Activated CD8-positive, alpha-beta T cell treated with anti-CD3 and anti-CD28 coated beads for 36 hours (primary cell): ENCODE measurements at regions of chr14 and their contacts with region 1.

Region 1: DNA sequence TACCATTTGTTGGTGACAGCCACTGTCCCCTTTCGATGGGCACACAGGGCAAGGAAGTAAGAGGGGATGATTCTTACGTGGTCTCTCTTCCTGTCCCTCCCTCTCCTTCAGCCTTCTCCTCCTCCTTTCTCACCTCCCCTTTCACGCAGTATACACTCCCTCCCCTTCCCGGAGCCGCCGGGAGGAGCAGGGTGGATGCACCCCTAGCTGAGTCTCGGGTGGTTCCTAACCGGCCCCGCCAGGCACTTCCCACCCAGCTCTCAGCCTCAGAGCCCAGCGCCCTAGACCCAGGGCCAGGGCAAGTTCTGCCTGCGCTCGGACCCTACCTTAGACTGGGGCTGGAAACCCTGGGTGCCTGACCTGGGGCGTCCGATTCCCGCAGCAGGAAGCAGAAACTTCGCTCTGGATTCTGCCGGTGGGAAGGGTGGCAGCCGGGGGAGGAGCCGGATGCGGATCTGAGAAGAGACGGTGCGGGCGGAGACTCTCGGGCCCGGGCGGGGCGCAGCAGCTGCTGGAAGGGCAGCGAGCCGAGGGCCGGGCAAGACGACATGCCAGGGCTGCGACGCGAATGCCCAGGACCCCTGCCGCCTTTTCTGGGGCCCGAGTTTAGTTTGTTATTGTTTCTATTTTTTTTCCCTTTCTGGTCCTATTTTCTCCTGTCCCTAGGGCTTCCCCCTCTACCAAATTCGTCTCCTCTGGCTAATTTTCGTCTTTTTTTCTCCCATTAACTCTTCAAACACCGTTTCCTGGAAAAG is at the start of gene TEP1:
- DNase-seq: peak; percentile 85
- ATAC-seq: peak; percentile 82
- H3K4me3 Mint-ChIP-seq: peak within 1 kb of the TSS; percentile 92
- H3K27ac Mint-ChIP-seq: peak within 1 kb of the TSS; percentile 97
- H3K4me1 Mint-ChIP-seq: peaks cover 45% of the 10 kb centered on the region
- H3K27me3 Mint-ChIP-seq: no peaks in the 10 kb centered on the region
- CTCF ChIP-seq: no peak
- total RNA-seq, gene TEP1: 22.8 to 25.3 TPM

Region 2: DNA sequence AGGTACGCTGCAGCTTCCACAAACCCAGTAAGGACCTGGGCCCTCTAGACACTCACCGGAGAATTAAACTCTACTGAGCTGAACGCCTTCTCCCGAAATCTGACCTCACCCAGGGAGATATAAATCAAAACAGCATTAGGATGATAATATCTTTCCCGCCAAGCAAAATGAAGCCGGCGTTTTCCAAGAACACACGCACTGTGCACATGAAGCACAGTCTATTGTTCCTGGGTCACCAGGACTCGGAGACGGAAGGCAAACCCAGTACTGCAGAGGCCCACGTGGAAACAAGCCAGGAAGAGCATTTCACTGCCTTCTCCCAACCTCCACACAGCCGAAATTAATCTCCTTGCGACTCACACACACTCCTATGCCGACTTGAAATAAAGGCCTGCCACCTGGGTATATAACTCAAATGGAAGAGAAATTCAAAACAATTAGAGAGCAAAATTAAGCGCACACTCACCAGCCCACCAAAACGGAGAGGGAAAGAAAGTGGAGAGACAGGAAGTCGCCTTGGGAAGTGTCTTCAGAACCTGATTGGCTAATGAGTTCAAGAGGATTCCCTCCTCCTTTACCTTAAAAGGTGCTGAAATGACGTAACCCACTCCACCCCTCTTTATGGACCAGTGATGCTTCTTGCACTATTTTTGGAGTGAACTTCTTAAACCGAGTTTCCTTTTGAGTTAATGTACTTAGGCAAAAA is 80.3 kb before region 1 on chr14 and contains the start of gene CCNB1IP1:
- CTCF ChIA-PET with region 1: interaction called, 15 read pairs
- POLR2A ChIA-PET with region 1: no interaction called
- intact Hi-C with region 1: loop called (anchors 5 kb)
- DNase-seq: peak; percentile 67
- ATAC-seq: peak; percentile 99
- H3K4me3 Mint-ChIP-seq: peak within 1 kb of the TSS; percentile 97
- H3K27ac Mint-ChIP-seq: peak within 1 kb of the TSS; percentile 93
- H3K4me1 Mint-ChIP-seq: peaks cover 34% of the 10 kb centered on the region
- H3K27me3 Mint-ChIP-seq: peaks cover 2% of the 10 kb centered on the region
- CTCF ChIP-seq: no peak
- total RNA-seq, gene CCNB1IP1: 79.0 to 82.7 TPM

Region 3: DNA sequence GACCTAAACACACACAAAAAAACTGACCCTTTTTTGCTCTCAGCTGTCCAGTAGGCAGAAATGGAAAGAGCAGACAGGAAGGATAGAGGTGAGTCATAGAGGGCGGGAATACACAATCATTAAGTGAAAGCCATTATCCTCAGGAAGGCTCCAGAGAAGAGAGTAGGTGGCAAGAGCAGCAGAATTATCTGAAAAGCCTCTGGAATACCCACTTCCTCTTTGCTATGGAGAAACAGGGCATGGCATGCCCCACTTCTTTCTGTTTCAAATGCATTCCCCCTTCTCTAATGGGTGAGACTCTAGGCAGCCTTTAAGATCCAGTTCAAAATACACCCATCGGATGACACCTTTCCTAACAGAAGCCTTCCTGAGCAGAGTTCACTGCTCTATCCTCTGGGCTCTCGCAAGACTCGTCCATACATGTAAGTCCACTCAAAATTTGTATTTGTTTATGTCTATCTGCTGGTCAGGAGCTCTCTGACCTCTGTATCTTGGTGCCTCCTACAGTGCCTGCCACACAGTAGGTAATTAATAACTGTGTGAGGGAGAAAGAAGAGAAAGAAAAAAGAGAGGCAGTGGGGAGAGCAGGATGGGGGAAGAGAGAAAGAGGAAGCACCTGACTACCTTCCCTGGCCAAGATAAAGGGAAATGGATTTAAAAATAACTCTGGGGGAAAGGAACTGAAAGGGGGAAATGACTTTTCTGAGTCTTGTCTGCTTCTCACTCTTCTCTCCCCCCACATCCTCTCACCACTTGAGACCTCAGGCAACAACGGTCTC is 14.2 kb after region 1 on chr14:
- CTCF ChIA-PET with region 1: interaction called, 42 read pairs
- POLR2A ChIA-PET with region 1: interaction called, 23 read pairs
- intact Hi-C with region 1: no loop called
- DNase-seq: peak; percentile 26
- ATAC-seq: peak; percentile 72
- H3K4me3 Mint-ChIP-seq: peak overlapping the region; percentile 63
- H3K27ac Mint-ChIP-seq: peak overlapping the region; percentile 91
- H3K4me1 Mint-ChIP-seq: peaks cover 42% of the 10 kb centered on the region
- H3K27me3 Mint-ChIP-seq: no peaks in the 10 kb centered on the region
- CTCF ChIP-seq: no peak

Region 4: DNA sequence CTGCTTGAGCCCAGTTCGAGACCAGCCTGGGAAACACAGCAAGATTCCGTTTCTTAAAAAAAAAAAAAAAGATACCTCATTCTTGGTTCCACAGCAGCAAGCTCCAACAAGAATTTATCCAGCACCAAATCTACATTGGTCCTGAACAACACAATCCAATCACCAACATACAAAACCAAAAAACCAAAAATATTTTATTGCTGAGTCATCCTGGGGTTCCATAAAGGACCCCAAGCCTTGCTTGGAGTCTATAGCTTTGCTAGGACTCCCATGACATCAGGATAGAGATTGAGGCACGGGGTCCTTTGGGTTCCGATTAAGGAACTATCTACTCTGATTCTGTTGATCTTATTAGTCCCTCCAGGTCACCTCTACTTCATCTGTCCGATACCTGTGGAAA is 33.7 kb after region 1 on chr14:
- CTCF ChIA-PET with region 1: interaction called, 72 read pairs
- POLR2A ChIA-PET with region 1: interaction called, 14 read pairs
- intact Hi-C with region 1: no loop called
- DNase-seq: no peak
- ATAC-seq: no peak
- H3K4me3 Mint-ChIP-seq: no peak overlapping the region
- H3K27ac Mint-ChIP-seq: peak overlapping the region; percentile 43
- H3K4me1 Mint-ChIP-seq: peaks cover 7% of the 10 kb centered on the region
- H3K27me3 Mint-ChIP-seq: no peaks in the 10 kb centered on the region
- CTCF ChIP-seq: no peak

Region 5: DNA sequence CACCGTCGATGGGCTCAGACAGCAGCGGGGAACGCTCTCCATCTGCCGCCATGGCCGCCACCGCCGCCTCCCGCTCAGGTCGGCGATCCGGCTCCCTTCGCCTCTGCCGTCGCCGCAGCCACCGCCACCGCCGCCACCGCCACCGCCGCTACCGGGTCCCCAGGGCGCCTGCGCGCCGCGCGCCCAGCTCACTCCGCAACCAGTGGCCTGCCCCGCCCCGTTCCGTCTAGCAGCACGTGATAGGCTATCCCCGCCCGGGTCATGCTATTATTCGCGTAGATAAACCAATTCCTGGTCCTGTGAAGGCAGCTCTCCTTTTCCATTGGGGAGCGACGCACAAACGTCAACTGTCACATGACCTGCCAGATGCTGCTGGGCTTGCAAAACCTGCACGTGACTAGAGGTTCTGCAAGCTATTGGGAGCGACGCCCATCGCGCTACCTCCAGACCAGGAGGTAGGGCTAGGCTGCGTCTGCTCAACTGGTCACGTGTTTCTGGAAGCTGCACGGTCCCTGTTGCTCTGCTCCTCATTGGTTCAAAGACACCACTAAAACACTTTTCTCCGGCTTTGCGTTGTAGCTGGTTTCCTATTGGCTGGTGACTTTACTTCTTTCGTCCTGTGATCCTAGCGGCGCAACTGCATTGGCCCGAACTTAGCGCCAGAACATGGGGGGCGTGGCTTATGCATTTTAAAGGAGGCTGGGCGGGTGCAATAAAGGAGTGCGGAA is 48.2 kb after region 1 on chr14 and contains the start of gene PIP4P1:
- CTCF ChIA-PET with region 1: interaction called, 72 read pairs
- POLR2A ChIA-PET with region 1: interaction called, 43 read pairs
- intact Hi-C with region 1: no loop called
- DNase-seq: peak; percentile 99
- ATAC-seq: peak; percentile 95
- H3K4me3 Mint-ChIP-seq: peak within 1 kb of the TSS; percentile 90
- H3K27ac Mint-ChIP-seq: peak within 1 kb of the TSS; percentile 98
- H3K4me1 Mint-ChIP-seq: peaks cover 26% of the 10 kb centered on the region
- H3K27me3 Mint-ChIP-seq: no peaks in the 10 kb centered on the region
- CTCF ChIP-seq: no peak
- total RNA-seq, gene PIP4P1: 21.0 to 27.3 TPM

Region 6: GRCh38 chr14:20597103-20597502 is 183.9 kb after region 1 on chr14:
- CTCF ChIA-PET with region 1: no interaction called
- POLR2A ChIA-PET with region 1: no interaction called
- intact Hi-C with region 1: no loop called
- DNase-seq: no peak
- ATAC-seq: no peak
- H3K4me3 Mint-ChIP-seq: no peak overlapping the region
- H3K27ac Mint-ChIP-seq: no peak overlapping the region
- H3K4me1 Mint-ChIP-seq: peaks cover 3% of the 10 kb centered on the region
- H3K27me3 Mint-ChIP-seq: peaks cover 1% of the 10 kb centered on the region
- CTCF ChIP-seq: no peak